ENCODE measurements at regions of chr14 and their contacts with region 1.

Region 1: GRCh38 chr14:77111043-77111442 is 13.0 kb downstream of the CIPC start:
- DNase-seq: peak; percentile 76 to 93
- H3K4me3 ChIP-seq: no peak overlapping the region
- H3K27ac ChIP-seq: peak overlapping the region; percentile 21; the same call in 1 of the 2 replicates
- H3K4me1 ChIP-seq: peaks cover 5% of the 10 kb centered on the region; the same call in 1 of the 2 replicates
- H3K27me3 ChIP-seq: no peaks in the 10 kb centered on the region
- CTCF ChIP-seq: no peak

Region 2: DNA sequence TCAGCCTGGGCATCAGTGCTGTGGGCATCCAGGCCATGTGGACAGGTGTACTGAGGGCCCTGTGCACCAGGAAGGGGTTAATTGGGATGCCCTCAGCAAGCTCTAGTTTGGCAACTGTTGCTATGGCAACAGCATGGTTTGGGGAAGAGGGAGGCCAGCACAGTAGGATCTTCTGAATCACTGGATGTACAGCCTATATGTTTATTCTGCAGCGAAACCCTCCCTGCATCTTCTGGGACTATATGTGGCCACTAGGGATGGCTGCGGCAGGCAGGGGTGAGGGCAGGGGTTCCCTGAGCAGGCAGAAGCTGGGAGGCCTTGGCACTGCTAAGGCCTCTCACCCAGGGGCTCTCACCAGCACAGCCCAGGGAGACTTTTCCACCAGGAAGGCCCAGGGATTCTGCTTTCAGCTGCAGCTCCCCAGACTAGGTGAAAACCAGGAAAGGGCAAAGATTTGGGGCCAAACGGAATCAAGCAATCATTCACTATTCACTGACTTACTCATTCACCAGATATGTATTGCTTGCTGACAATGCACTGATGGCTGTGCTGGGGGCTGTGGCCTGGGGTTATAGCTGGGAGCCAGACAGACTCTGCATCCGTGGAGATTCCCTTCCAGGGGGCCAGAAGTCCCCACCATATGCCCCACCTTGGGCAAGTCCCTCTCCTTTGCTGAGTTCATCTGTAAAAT is 125.4 kb before region 1 on chr14:
- CTCF ChIA-PET with region 1: interaction called, 15 read pairs
- POLR2A ChIA-PET with region 1: no interaction called
- intact Hi-C with region 1: no loop called
- DNase-seq: peak in 1 of 2 experiments; percentile 61
- H3K4me3 ChIP-seq: no peak overlapping the region
- H3K27ac ChIP-seq: no peak overlapping the region
- H3K4me1 ChIP-seq: no peaks in the 10 kb centered on the region
- H3K27me3 ChIP-seq: no peaks in the 10 kb centered on the region
- CTCF ChIP-seq: no peak

Region 3: GRCh38 chr14:77033622-77034521 is 77.2 kb before region 1 on chr14:
- CTCF ChIA-PET with region 1: no interaction called
- POLR2A ChIA-PET with region 1: interaction called, 17 read pairs
- intact Hi-C with region 1: no loop called
- DNase-seq: peak; percentile 94
- H3K4me3 ChIP-seq: peak overlapping the region; percentile 56
- H3K27ac ChIP-seq: peak overlapping the region; percentile 93
- H3K4me1 ChIP-seq: peaks cover 92% of the 10 kb centered on the region
- H3K27me3 ChIP-seq: no peaks in the 10 kb centered on the region
- CTCF ChIP-seq: peak; percentile 17; the same call in 1 of the 2 replicates

Region 4: DNA sequence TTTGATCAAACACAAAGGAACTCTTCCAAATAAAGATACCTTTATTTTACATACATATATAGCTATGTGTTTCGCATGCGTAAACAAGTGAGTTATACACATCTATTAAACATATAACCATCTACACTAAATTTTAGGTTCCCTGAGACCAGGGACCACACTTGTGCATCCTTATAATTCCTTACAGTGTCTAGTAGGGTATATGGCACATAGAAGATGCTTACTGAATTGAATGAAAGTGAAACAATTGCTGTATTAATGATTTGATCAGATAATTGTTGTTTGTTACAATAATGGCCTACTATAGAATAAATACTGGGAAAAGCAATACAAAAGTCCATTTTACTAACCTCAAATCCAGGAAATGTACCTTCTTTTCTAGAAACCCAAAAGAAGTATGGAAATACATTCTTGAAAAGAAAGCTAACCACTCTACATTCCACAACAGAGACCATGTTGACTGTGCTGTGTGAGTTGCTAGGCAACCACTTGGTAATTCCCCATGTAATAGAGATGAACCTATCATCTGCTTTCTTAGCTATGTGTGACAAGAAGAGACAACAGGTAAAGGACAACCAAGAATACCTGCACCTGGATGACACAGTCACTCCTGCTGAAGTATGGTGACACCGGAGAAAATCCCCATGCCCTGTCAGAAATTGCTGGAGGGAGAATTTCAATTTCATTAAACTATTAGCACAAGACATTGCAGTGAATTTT is 24.9 kb before region 1 on chr14:
- CTCF ChIA-PET with region 1: no interaction called
- POLR2A ChIA-PET with region 1: no interaction called
- intact Hi-C with region 1: loop called (anchors 1 kb)
- DNase-seq: peak; percentile 58 to 86
- H3K4me3 ChIP-seq: no peak overlapping the region
- H3K27ac ChIP-seq: no peak overlapping the region
- H3K4me1 ChIP-seq: peaks cover 38% of the 10 kb centered on the region
- H3K27me3 ChIP-seq: no peaks in the 10 kb centered on the region
- CTCF ChIP-seq: no peak

Region 5: DNA sequence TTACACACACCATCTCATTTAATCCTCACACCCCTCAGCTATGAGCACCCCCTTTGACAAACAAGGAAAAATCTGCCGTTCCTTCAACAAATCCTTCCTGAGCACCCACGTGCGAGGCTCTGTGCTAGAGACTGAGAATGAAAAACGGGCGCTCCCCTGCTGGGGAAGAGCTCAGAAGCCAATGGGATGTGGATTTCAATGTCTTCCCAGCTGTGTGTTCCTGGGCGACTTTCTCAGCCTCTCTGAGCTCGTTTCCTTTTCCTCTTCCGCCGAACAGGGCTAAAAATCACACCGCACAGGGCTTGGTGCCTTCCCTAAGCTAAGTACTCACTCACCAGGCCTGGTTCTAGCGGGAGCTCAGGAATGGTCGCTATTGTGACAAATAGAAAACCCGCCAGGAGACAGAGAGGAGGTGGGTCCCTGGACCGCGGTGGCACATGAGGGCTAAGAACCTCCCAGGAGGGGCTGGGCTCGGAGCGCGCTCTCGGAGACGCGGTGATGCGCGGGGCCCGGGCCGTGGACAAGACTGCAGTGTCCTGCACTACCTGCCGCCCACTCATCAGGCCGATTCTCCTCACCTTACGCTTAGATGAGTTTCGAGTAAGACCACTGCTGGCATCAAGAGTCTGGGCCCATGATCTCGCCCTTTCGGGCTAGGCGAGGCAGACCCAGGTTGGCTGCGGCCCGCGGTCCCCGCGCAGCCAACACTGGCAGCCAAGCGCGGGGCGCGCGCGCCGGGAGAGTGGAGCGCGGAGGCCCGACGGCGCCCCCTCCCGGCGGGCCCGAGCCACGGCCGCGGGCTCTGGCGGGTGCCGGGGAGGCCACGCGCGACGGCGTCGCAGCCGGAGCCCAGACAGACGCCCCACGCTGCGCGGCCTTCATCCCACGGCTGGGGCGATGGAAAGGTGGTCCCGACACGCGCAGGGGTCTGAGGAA is 13.6 kb after region 1 on chr14:
- CTCF ChIA-PET with region 1: interaction called, 23 read pairs
- POLR2A ChIA-PET with region 1: interaction called, 24 read pairs
- intact Hi-C with region 1: loop called (anchors 1 kb)
- DNase-seq: peak in 1 of 2 experiments; percentile 81
- H3K4me3 ChIP-seq: peak overlapping the region; percentile 31; the same call in 1 of the 2 replicates
- H3K27ac ChIP-seq: no peak overlapping the region
- H3K4me1 ChIP-seq: peaks cover 26% of the 10 kb centered on the region
- H3K27me3 ChIP-seq: peaks cover 51% of the 10 kb centered on the region
- CTCF ChIP-seq: peak; percentile 28; the same call in 1 of the 2 replicates

Region 6: DNA sequence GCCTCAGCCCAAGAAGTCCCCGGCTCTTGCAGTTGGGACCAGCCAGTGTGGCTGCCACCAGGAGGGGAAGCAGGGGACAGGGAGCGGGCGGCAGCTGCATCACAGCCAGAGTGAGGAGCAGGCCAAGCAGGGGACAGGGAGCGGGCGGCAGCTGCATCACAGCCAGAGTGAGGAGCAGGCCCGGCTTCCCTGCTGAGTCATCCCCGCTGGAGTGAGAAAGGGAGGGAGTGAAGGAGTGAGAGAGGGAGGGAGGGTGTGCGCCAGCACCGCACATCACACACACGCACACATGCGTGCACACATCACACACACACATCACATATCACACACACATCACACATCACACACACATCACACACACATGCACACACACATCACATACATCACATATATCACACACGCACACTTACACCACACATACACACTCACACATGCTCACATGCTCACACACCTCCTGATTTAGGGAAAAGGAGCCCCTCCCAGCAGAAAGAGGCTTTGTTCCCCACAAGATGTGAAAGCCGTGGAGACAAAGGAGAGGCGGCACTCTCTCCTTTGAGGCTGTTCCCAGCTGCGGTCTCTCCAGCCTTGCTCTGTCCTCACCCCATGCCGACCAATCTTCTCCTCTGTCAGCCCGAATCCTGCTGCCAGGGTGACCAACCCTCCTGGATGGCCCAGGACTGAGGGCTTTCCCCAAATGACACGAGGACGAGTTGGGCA is 47.3 kb after region 1 on chr14:
- CTCF ChIA-PET with region 1: no interaction called
- POLR2A ChIA-PET with region 1: no interaction called
- intact Hi-C with region 1: no loop called
- DNase-seq: peak in 1 of 2 experiments; percentile 69
- H3K4me3 ChIP-seq: no peak overlapping the region
- H3K27ac ChIP-seq: no peak overlapping the region
- H3K4me1 ChIP-seq: no peaks in the 10 kb centered on the region
- H3K27me3 ChIP-seq: peaks cover 73% of the 10 kb centered on the region
- CTCF ChIP-seq: no peak